A673 (cell line): ENCODE measurements at regions of chr9 and their contacts with region 1.

Region 1: GRCh38 chr9:17052626-17053025 is 82.2 kb upstream of the CNTLN start:
- DNase-seq: no peak
- H3K4me3 ChIP-seq: no peak overlapping the region
- H3K27ac ChIP-seq: no peak overlapping the region
- H3K4me1 ChIP-seq: no peaks in the 10 kb centered on the region
- H3K27me3 ChIP-seq: no peaks in the 10 kb centered on the region
- CTCF ChIP-seq: no peak

Region 2: GRCh38 chr9:16450578-16450977 is 602.0 kb before region 1 on chr9:
- CTCF ChIA-PET with region 1: no interaction called
- POLR2A ChIA-PET with region 1: no interaction called
- intact Hi-C with region 1: no loop called
- DNase-seq: no peak
- H3K4me3 ChIP-seq: no peak overlapping the region
- H3K27ac ChIP-seq: no peak overlapping the region
- H3K4me1 ChIP-seq: no peaks in the 10 kb centered on the region
- H3K27me3 ChIP-seq: peaks cover 13% of the 10 kb centered on the region
- CTCF ChIP-seq: no peak

Region 3: DNA sequence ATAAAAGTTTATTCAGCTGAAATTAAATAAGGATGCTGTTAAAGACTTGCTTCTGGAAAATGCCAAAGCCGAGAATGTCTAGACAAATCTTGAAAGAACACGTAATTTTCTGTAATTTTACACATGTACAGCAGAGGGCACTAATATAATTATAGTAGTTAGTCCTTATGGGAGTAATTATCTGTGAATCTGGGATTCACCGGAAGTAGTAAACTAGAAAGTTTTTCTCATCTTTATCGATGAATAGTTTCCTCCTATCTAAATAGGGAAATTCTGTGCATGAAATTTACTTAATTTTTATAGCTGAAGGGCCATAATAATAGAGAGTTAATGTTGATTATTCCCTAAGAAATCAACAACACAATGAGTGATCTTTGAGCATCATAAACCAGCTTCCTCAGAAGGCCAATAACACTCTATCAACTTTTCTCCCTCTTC is 63.8 kb after region 1 on chr9:
- CTCF ChIA-PET with region 1: no interaction called
- POLR2A ChIA-PET with region 1: no interaction called
- intact Hi-C with region 1: no loop called
- DNase-seq: peak; percentile 48
- H3K4me3 ChIP-seq: no peak overlapping the region
- H3K27ac ChIP-seq: no peak overlapping the region
- H3K4me1 ChIP-seq: no peaks in the 10 kb centered on the region
- H3K27me3 ChIP-seq: no peaks in the 10 kb centered on the region
- CTCF ChIP-seq: peak; percentile 53

Region 4: GRCh38 chr9:17137566-17137965 is 84.9 kb after region 1 on chr9:
- CTCF ChIA-PET with region 1: interaction called, 10 read pairs
- POLR2A ChIA-PET with region 1: no interaction called
- intact Hi-C with region 1: no loop called
- DNase-seq: no peak
- H3K4me3 ChIP-seq: no peak overlapping the region
- H3K27ac ChIP-seq: no peak overlapping the region
- H3K4me1 ChIP-seq: no peaks in the 10 kb centered on the region
- H3K27me3 ChIP-seq: no peaks in the 10 kb centered on the region
- CTCF ChIP-seq: no peak